A673 (cell line): ENCODE measurements at regions of chr9 and their contacts with region 1.

Region 1: GRCh38 chr9:114414346-114414745 is 26.6 kb upstream of the AKNA start:
- DNase-seq: no peak
- H3K4me3 ChIP-seq: no peak overlapping the region
- H3K27ac ChIP-seq: no peak overlapping the region
- H3K4me1 ChIP-seq: no peaks in the 10 kb centered on the region
- H3K27me3 ChIP-seq: no peaks in the 10 kb centered on the region
- CTCF ChIP-seq: no peak

Region 2: GRCh38 chr9:114631166-114631565 is 216.8 kb after region 1 on chr9:
- CTCF ChIA-PET with region 1: no interaction called
- POLR2A ChIA-PET with region 1: interaction called, 21 read pairs
- intact Hi-C with region 1: no loop called
- DNase-seq: no peak
- H3K4me3 ChIP-seq: no peak overlapping the region
- H3K27ac ChIP-seq: no peak overlapping the region
- H3K4me1 ChIP-seq: no peaks in the 10 kb centered on the region
- H3K27me3 ChIP-seq: no peaks in the 10 kb centered on the region
- CTCF ChIP-seq: no peak